ENCODE measurements at regions of chr10 and their contacts with region 1.

Region 1: DNA sequence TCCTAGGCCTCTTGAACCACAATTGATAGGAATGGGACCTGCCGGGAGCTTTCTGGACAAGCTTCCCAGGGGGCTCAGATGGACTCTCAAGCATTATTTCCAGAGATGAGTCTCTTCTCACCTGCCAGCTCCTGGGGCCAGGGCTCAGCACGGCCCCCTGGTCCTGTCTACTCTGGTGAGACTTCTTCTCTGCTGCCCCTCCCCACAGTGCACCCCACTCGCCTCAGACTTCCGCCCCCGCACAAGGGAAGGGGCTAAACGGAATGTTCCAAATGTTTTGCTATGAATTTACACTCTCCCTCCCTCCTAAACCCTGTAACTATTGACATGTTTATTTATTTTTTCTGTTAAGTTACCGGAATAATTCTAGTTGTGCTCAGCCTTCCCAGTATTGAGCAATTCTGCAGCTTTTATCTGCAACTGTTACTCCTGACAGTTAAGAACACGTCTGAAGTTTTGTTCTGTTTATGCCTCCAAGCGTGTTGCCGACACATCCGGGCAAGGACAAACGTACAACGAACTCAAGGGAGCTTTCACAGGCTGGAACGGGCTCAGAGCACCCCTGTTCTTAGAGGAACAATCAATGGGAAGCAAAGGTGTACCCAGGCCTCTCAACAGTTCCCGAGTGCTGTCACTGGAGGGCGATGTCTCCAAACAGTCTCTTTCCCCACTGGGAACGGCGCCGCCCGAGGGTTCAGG is 55.2 kb downstream of the FHIP2A start:
- DNase-seq: peak; percentile 54 to 64
- ATAC-seq: peak in 7 of 8 donors; percentile 68 to 88 (median 83)
- H3K4me3 ChIP-seq: no peak overlapping the region
- H3K27ac ChIP-seq: no peak overlapping the region
- H3K4me1 ChIP-seq: peaks cover 0 to 24% (median 0%) of the 10 kb centered on the region in 9 donors
- H3K27me3 ChIP-seq: peaks cover 0 to 5% (median 0%) of the 10 kb centered on the region in 7 donors
- CTCF ChIP-seq: peak; percentile 34 to 79 (median 71)

Region 2: GRCh38 chr10:115129752-115130151 is 253.0 kb after region 1 on chr10:
- intact Hi-C with region 1: loop called (anchors 1 to 10 kb)
- DNase-seq: no peak
- ATAC-seq: peak in 1 of 8 donors; percentile 42
- H3K4me3 ChIP-seq: no peak overlapping the region
- H3K27ac ChIP-seq: no peak overlapping the region
- H3K4me1 ChIP-seq: no peaks in the 10 kb centered on the region
- H3K27me3 ChIP-seq: no peaks in the 10 kb centered on the region
- CTCF ChIP-seq: peak in 7 of 9 donors; percentile 31 to 64 (median 49)